Mammary epithelial cell (primary cell): ENCODE measurements at regions of chr11 and their contacts with region 1.

Region 1: GRCh38 chr11:94602430-94603372 is 35.5 kb downstream of the PIWIL4 start:
- DNase-seq: peak; percentile 68
- H3K4me3 ChIP-seq: no peak overlapping the region
- H3K27ac ChIP-seq: no peak overlapping the region
- H3K4me1 ChIP-seq: no peaks in the 10 kb centered on the region
- H3K27me3 ChIP-seq: no peaks in the 10 kb centered on the region
- CTCF ChIP-seq: peak; percentile 46 to 53

Region 2: DNA sequence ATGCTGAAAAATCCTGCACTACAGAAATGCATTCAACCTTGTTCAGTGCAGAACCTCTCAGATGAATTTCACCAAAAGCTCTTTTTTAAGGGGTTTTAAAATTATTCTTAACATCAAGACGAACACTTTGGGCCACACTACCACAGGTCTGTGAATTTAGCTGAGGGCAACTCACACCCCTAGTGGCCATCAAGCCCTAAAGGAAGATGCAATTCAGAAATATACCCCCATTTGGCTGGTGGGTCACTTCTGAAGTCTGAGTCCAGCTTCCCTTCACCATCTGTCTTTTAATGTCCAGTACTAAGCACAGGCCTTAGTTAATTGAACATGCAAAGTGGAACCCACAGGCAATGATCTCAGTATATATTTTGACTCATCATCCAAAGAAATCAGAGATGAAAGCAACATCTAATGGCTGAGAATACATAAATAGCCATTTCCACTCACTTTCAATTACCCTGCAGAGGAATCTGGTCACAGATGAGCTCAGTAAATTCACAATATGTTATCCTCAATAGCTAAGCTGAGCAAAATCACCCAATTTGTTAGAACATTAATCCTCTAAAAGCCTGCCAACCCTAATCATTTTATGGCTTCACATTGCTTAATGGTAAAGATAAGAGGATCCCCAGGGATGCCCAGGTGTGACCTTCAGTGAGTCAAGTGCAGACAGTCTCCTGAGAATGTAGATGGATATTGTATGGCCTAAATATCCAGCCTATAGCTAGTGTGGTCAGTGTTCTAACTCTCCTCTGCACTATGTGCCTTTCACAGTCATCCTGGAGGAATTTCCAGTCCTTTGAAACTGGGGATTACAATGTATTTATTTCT is 1136.6 kb after region 1 on chr11:
- CTCF ChIA-PET with region 1: no interaction called
- dilution Hi-C with region 1: no loop called
- in situ Hi-C with region 1: no loop called
- intact Hi-C with region 1: loop called (anchors 5 kb)
- DNase-seq: no peak
- H3K4me3 ChIP-seq: no peak overlapping the region
- H3K27ac ChIP-seq: no peak overlapping the region
- H3K4me1 ChIP-seq: no peaks in the 10 kb centered on the region
- H3K27me3 ChIP-seq: no peaks in the 10 kb centered on the region
- CTCF ChIP-seq: peak in 1 of 2 donors; percentile 2